ENCODE measurements at regions of chr3 and their contacts with region 1.

Region 1: DNA sequence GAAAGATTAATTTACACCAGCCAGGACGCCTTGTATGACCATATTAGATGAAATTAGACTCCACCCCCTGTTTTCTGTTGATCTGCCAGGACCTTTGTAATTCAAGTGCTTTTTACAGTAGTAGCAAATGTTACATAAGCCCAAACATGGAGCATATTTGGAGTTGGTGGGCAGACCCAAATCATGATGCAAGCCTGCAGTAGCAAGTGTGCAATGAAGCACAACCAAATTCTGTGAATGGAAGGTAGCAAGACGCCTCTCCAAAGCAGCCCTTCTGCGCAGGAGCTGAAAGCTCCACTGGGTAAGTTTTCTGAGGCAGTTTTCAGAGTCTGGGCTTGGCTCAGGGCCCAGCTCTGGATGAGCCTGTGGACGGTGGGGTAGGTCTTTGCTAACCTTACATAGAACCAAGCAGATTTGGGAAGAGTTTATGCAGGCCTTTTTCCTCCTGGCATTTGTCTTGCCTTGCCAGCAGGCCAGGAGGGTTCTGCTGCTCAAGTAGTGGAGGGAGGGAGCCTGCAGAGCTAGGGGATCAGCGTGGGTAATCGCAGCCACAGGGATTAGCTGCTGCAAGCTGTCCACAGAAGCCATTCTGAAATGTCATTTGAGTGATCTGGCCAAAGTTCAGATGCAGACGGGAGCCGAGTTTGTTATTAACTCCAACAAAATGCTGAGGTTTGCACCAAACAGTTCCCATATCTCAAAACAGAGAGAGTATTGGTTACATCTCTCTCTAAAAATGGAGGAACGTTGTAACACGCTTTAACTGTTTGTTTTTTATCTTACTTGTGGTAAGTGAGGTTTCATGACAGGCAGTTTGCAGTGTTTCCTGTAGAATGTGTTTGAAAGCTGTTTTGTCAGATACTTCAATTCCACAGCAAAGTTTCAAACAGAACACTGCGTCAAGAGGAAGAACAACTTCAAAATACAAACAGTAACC is 55.4 kb downstream of the PSMD6 start:
- DNase-seq: peak in 9 of 10 donors; percentile 22 to 92 (median 71)
- ATAC-seq: peak; percentile 81 to 83
- H3K4me3 Mint-ChIP-seq: peak overlapping the region; percentile 88 to 98 (median 94)
- H3K27ac Mint-ChIP-seq: peak overlapping the region; percentile 93 to 99 (median 96)
- H3K4me1 Mint-ChIP-seq: peaks cover 15 to 76% (median 64%) of the 10 kb centered on the region in 4 donors
- H3K27me3 Mint-ChIP-seq: no peaks in the 10 kb centered on the region

Region 2: DNA sequence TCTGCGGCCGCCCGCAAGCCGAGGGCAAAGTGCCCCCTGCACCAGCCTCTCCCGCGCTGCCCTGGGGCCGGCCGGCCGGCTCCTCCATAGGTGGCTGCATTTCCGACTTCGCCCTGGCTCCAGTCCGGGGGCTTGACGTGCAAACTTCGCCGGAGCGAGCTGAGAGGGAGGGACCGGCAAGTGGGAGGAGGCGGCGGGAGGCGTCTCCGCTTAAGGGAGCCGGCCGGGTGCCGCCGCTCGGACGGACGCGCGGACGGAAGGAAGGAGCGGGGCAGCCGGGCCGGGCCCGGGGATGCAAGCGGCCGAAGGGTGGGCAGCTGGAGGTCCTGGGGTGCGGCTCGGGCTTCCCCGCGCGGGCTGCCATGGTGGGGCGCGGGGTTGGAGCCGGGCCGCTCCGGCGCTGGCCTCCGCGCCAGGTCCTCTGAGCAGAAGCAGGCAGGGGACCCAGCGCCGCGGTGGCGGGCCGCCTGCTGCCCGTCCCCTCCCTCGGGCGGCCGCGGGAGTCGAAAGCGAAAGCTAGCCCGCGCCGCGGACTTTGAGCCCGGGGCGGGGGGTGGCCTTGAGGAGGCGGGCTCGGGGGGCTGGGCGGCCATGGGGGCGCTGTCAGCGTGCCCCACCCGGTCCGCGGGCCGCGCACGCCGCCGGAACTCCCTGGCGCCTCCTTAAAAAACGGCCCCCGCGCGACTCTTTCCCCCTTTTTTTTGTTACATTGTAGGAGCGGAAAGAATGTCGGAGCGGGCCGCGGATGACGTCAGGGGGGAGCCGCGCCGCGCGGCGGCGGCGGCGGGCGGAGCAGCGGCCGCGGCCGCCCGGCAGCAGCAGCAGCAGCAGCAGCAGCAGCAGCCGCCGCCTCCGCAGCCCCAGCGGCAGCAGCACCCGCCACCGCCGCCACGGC is 55.8 kb before region 1 on chr3 and contains the start of gene SCAANT1:
- POLR2A ChIA-PET with region 1: interaction called, 28 read pairs
- DNase-seq: peak; percentile 69 to 91 (median 82)
- ATAC-seq: peak; percentile 68 to 74
- H3K4me3 Mint-ChIP-seq: peak within 1 kb of the TSS; percentile 87 to 94 (median 92)
- H3K27ac Mint-ChIP-seq: peak within 1 kb of the TSS; percentile 79 to 98 (median 96)
- H3K4me1 Mint-ChIP-seq: peaks cover 9 to 49% (median 34%) of the 10 kb centered on the region in 4 donors
- H3K27me3 Mint-ChIP-seq: no peaks in the 10 kb centered on the region
- polyA plus RNA-seq, gene SCAANT1: not detected

Region 3: DNA sequence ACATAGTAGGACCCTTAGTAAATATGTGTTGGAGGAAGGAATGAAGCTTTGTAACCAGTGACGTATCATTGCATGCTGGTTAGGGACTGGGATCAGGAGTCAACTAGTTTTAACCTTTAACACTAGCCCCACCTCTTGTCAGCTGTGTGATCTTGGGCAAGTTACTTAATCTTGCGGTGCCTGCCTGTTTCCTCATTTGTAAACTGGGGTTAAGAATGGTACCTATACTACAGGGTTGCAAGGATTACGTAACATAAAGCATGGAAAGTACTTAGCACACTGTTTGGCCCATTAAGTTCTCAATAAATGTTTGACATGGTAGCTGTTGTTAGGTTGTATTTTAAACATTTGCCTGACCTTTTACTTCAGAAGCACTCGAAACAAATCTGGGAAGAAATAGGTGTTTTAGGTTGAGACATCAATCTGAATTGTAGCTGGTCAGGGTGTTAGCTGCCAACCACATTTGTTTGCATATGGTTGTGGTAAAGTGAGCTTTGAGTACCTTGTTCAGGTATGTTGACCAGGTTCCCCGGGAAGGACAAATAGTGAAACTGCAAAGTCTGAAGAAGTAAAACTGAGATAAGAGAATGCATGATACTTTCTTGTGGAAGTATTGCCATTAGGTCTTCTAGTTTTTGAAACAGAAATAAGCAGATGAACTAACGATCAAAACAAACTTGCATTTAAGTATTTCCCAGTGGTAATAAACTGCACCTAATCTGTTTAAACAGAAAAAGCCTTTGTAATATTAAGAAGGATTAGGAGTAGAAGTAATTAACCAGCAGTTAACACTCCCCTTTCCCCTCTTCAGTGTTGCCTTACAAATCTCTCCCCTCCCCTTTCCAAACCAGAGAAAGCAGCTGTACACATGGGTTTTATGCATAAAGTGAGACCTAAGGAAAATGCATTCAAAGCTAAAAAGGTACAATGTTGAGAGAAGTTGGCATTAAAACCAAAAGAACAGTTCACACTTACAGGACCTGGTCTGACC is 30.0 kb before region 1 on chr3:
- POLR2A ChIA-PET with region 1: no interaction called
- DNase-seq: no peak
- ATAC-seq: peak in 1 of 2 donors; percentile 28
- H3K4me3 Mint-ChIP-seq: peak overlapping the region in 1 of 10 donors; percentile 5
- H3K27ac Mint-ChIP-seq: peak overlapping the region in 5 of 10 donors; percentile 11 to 80 (median 51)
- H3K4me1 Mint-ChIP-seq: peaks cover 26 to 68% (median 64%) of the 10 kb centered on the region in 4 donors
- H3K27me3 Mint-ChIP-seq: no peaks in the 10 kb centered on the region

Region 4: DNA sequence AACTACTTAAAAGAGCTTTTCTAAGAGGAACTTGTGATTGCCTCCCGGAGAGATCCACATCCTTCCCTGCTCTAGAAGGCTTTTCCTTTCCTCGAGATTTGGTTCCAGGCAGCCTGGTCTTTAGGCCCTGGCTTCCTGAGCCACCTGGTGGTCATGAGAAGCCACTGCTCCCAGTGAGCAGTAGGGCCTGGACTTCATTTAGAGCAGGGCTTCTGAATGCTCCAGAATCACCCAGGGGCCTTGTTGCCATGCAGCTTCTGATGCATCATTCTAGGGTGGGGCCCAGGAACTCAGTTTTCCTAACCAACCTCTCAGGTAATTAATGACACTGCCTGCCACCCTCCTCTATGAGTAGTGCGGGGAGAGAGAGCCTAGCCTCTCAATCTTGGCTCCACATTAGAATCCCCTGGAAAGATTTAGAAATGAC is 25.7 kb after region 1 on chr3:
- POLR2A ChIA-PET with region 1: interaction called, 22 read pairs
- DNase-seq: peak; percentile 33 to 79 (median 57)
- ATAC-seq: peak; percentile 86 to 89
- H3K4me3 Mint-ChIP-seq: peak overlapping the region in 1 of 10 donors; percentile 28
- H3K27ac Mint-ChIP-seq: peak overlapping the region; percentile 44 to 92 (median 82)
- H3K4me1 Mint-ChIP-seq: peaks cover 23 to 59% (median 38%) of the 10 kb centered on the region in 4 donors
- H3K27me3 Mint-ChIP-seq: no peaks in the 10 kb centered on the region

Region 5: DNA sequence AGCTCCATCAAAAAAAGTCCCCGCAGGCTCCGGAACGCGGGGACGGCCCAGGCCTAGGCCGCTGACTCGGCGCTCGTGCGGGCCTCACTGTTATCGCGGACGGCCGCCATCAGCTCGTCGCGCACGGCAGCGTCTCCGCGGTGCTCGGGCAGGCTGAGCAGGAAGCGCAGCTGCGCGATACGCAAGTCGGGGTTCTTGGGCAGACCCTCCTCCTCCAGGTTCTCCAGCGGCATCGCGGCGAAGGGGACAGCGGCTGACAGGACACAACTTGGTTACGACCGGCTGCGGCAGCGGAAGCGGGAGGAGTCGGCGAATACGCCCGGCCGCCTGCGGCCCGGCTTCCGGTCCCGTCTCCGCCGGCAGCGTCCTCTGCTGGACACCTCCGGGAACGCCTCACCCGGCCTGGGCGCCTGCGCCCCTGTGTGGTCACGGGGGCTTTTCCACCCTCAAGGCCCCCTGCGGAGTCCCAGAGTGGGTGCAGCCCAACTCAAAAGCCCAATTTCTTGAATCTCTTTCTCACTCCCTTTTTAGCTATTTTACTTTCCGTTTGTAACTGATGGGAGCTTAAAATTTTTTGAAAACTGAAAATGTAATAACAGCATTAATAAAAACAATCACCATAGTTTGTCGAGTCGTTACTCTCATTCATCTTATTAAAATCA is 55.4 kb after region 1 on chr3 and contains the start of gene PSMD6:
- POLR2A ChIA-PET with region 1: interaction called, 29 read pairs
- DNase-seq: peak; percentile 86 to 99 (median 93)
- ATAC-seq: peak; percentile 93
- H3K4me3 Mint-ChIP-seq: peak within 1 kb of the TSS; percentile 75 to 92 (median 88)
- H3K27ac Mint-ChIP-seq: peak within 1 kb of the TSS; percentile 57 to 96 (median 92)
- H3K4me1 Mint-ChIP-seq: peaks cover 12 to 37% (median 33%) of the 10 kb centered on the region in 4 donors
- H3K27me3 Mint-ChIP-seq: peaks cover 4 to 16% (median 12%) of the 10 kb centered on the region in 5 donors
- polyA plus RNA-seq, gene PSMD6: 107 to 114 (median 110) TPM

Measured in naive thymus-derived CD8-positive, alpha-beta T cell (primary cell).